Lower leg skin (tissue), 4 donors: ENCODE measurements at regions of chr22 and their contacts with region 1.

Region 1: GRCh38 chr22:44625981-44626687 is 75.9 kb upstream of the PRR5 start:
- DNase-seq: peak; percentile 56 to 94
- H3K4me3 ChIP-seq: no peak overlapping the region
- CTCF ChIP-seq: peak in 2 of 3 donors; percentile 60 to 95
- POLR2A ChIP-seq: no peak

Region 2: DNA sequence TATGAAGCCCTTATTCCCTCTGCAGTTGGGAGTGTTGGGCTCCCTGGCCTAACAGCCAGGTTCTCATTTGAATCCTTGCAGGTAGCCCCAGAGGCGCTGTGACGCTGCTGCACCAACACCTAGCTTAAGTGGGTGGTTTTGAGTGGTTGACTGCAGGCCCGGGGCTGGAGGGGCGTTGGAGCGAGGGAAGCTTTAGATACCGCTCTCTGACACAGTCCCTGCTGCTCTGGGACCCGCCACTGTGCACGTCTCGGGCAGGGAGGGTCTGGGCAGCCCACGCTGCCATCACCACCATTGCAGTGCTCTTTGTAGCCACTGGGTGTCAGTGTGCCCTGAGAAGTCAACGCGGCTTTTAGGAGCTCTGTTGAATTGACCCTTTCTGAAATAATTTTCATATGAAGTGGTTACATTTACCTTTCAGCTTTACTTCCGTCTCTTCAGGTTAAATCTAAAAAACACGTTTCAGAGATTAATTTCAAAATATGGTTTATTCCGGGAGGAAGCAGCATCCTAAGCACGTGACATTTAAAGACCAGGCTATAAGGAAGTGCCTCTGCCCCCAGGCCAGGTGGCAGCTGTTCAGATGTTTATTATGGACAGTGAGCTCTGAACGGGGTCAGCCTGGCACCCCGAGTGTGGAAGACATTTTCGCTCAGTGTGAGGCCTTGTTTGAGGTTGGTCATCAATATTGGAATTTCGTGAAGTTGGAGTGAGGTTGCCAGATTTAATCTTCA is 632.9 kb before region 1 on chr22:
- intact Hi-C with region 1: loop called (anchors 5 kb)
- DNase-seq: no peak
- H3K4me3 ChIP-seq: no peak overlapping the region
- CTCF ChIP-seq: peak in 1 of 3 donors; percentile 73
- POLR2A ChIP-seq: no peak

Region 3: DNA sequence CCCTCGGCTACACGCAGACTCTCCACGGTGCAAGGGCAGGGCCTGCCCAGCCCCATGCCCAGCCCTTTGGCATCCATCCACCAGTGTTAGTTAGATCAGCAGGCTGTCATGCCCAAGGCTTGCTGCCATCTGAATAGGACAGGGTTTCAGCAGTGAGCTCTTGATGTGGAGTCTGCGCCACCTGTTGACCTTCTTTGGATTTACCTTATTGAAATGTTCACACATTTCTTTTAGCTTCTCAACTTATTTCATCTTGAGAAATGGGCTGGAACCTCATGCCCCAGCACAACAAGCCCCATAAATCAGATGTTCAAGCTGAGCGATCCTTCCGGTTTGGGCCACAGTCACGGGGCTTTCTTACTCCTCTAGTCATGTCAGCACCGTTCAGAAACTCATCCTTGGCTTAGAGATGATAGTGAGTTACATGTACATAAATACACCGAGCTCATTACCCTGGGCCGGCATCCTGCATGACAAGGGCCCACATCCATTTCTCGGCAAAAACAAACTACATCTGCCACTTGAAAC is 540.3 kb before region 1 on chr22:
- intact Hi-C with region 1: loop called (anchors 5 kb)
- DNase-seq: peak in 1 of 2 donors; percentile 50
- H3K4me3 ChIP-seq: no peak overlapping the region
- CTCF ChIP-seq: no peak
- POLR2A ChIP-seq: no peak